Calu3 (cell line): ENCODE measurements at regions of chr4 and their contacts with region 1.

Region 1: GRCh38 chr4:131098976-131099375 is 2003.0 kb downstream of the C4orf33 start:
- DNase-seq: no peak
- H3K4me3 Mint-ChIP-seq: no peak overlapping the region
- H3K27ac Mint-ChIP-seq: no peak overlapping the region
- H3K4me1 Mint-ChIP-seq: no peaks in the 10 kb centered on the region
- H3K27me3 Mint-ChIP-seq: no peaks in the 10 kb centered on the region
- CTCF ChIP-seq: no peak

Region 2: GRCh38 chr4:131302108-131302507 is 203.1 kb after region 1 on chr4:
- CTCF ChIA-PET with region 1: no interaction called
- intact Hi-C with region 1: loop called (anchors 5 kb)
- DNase-seq: no peak
- H3K4me3 Mint-ChIP-seq: no peak overlapping the region
- H3K27ac Mint-ChIP-seq: no peak overlapping the region
- H3K4me1 Mint-ChIP-seq: no peaks in the 10 kb centered on the region
- H3K27me3 Mint-ChIP-seq: no peaks in the 10 kb centered on the region
- CTCF ChIP-seq: no peak